AG04450 (cell line): ENCODE measurements at regions of chr22 and their contacts with region 1.

Region 1: DNA sequence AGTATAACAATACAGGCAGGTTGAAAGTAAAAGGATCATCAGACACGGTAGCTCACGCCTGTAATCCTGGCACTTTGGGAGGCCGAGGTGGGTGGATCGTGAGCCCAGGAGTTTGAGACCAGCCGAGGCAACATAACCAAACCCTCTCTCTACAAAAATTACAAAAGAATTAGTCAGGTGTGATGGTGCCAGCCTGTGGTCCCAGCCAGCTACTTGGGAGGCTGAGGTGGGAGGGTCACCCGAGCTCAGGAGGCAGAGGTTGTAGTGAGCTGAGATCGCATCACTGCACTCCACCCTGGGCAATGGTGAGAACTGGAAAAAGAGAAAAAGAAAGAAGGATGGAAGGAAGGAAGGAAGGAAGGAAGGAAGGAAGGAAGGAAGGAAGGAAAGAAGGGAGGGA is 43.0 kb upstream of the CBX7 start:
- DNase-seq: no peak
- H3K4me3 ChIP-seq: no peak overlapping the region
- H3K27ac ChIP-seq: no peak overlapping the region
- H3K27me3 ChIP-seq: peaks cover 4% of the 10 kb centered on the region
- CTCF ChIP-seq: no peak

Region 2: GRCh38 chr22:39178206-39179111 is 17.0 kb before region 1 on chr22:
- CTCF ChIA-PET with region 1: no interaction called
- POLR2A ChIA-PET with region 1: no interaction called
- DNase-seq: no peak
- H3K4me3 ChIP-seq: no peak overlapping the region
- H3K27ac ChIP-seq: no peak overlapping the region
- H3K27me3 ChIP-seq: no peaks in the 10 kb centered on the region
- CTCF ChIP-seq: no peak

Region 3: GRCh38 chr22:39205338-39206021 is 10.0 kb after region 1 on chr22:
- CTCF ChIA-PET with region 1: no interaction called
- POLR2A ChIA-PET with region 1: interaction called, 13 read pairs
- DNase-seq: no peak
- H3K4me3 ChIP-seq: no peak overlapping the region
- H3K27ac ChIP-seq: no peak overlapping the region
- H3K27me3 ChIP-seq: no peaks in the 10 kb centered on the region
- CTCF ChIP-seq: no peak